ENCODE measurements at regions of chr1 and their contacts with region 1.

Region 1: GRCh38 chr1:31938174-31938950 is at the start of gene PTP4A2:
- H3K4me3 ChIP-seq: peak within 1 kb of the TSS; percentile 97
- H3K27ac ChIP-seq: peak within 1 kb of the TSS; percentile 88
- H3K4me1 ChIP-seq: peaks cover 22% of the 10 kb centered on the region
- CTCF ChIP-seq: peak; percentile 18; the same call in 1 of the 2 replicates

Region 2: DNA sequence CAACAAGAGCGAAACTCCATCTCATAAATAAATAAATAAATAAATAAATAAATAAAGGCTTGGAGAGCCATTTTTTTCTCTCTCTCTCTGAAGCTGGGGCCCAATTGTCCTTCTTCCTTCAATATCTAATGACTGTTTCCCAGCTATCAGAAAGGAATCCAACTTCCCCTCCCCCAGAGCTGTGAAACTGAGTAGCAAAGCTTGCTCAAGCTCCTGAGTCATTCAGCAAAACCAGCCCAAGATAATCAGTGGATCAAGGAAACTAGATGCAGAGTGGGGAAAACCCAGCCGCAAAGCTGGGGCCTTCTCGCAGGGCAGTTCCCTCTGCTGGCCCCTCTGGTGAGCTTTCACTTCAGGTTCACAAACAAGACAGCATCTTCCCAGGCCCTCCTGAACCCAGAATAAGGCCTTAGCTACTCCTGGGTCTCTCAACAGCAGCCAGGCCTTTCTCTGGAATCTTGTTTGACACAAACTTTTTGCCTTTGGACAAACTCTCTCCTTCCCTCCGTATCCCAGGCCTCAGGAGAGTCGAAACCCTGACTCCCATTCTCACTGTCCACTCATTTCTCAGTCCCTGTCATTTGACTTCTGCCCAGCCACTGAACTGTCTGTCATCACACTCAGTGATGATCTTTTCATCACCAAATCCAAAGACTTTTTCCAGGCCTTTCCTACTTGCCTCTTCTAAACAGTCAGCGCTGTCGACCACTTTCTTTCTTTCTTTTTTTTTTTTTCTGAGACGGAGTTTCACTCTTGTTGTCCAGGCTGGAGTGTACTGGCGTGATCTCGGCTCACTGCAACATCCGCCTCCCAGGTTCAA is 17.8 kb after region 1 on chr1:
- CTCF ChIA-PET with region 1: interaction called, 53 read pairs
- POLR2A ChIA-PET with region 1: interaction called, 5 read pairs
- H3K4me3 ChIP-seq: no peak overlapping the region
- H3K27ac ChIP-seq: peak overlapping the region; percentile 20; the same call in 1 of the 2 replicates
- H3K4me1 ChIP-seq: peaks cover 7% of the 10 kb centered on the region; the same call in 1 of the 2 replicates
- CTCF ChIP-seq: 0 out of 2 replicates have a peak, but pooled peaks have one; percentile 18

Region 3: GRCh38 chr1:31961536-31961935 is 23.2 kb after region 1 on chr1:
- CTCF ChIA-PET with region 1: interaction called, 53 read pairs
- POLR2A ChIA-PET with region 1: interaction called, 7 read pairs
- H3K4me3 ChIP-seq: no peak overlapping the region
- H3K27ac ChIP-seq: no peak overlapping the region
- H3K4me1 ChIP-seq: peaks cover 3% of the 10 kb centered on the region; the same call in 1 of the 2 replicates
- CTCF ChIP-seq: no peak